ENCODE measurements at regions of chr22 and their contacts with region 1.

Region 1: GRCh38 chr22:45977003-45977411 is at the start of gene WNT7B:
- DNase-seq: peak; percentile 33
- ATAC-seq: peak; percentile 58
- H3K4me3 ChIP-seq: peak within 1 kb of the TSS; percentile 59 to 78
- H3K27ac ChIP-seq: peak within 1 kb of the TSS; percentile 35; the same call in 1 of the 2 replicates
- H3K4me1 ChIP-seq: peaks cover 18 to 44% of the 10 kb centered on the region in 2 experiments
- H3K27me3 ChIP-seq: no peaks in the 10 kb centered on the region
- CTCF ChIP-seq: no peak
- POLR2A ChIP-seq: no peak
- RAD21 ChIP-seq: no peak
- total RNA-seq, gene WNT7B: 10.5 TPM

Region 2: GRCh38 chr22:45645526-45646414 is 331.2 kb before region 1 on chr22:
- CTCF ChIA-PET with region 1: no interaction called
- POLR2A ChIA-PET with region 1: interaction called, 5 read pairs
- RAD21 ChIA-PET with region 1: interaction called, 3 to 4 read pairs
- intact Hi-C with region 1: loop called (anchors 1 kb)
- DNase-seq: peak; percentile 26
- ATAC-seq: peak; percentile 94
- H3K4me3 ChIP-seq: peak overlapping the region; percentile 2 to 24; a peak in 3 of 4 replicates
- H3K27ac ChIP-seq: no peak overlapping the region
- H3K4me1 ChIP-seq: peaks cover 0 to 23% of the 10 kb centered on the region in 2 experiments; a peak in 3 of 4 replicates
- H3K27me3 ChIP-seq: no peaks in the 10 kb centered on the region
- CTCF ChIP-seq: peak; percentile 57 to 85 (median 80)
- POLR2A ChIP-seq: no peak
- RAD21 ChIP-seq: peak; percentile 90

Measured in HCT116 (cell line).